Tibial artery (tissue), 4 donors: ENCODE measurements at regions of chr21 and their contacts with region 1.

Region 1: GRCh38 chr21:40143822-40144525 is 276.7 kb downstream of the PCP4 start:
- DNase-seq: no peak
- H3K4me3 ChIP-seq: no peak overlapping the region
- H3K27ac ChIP-seq: no peak overlapping the region
- H3K4me1 ChIP-seq: no peaks in the 10 kb centered on the region
- H3K27me3 ChIP-seq: peaks cover 0 to 10% of the 10 kb centered on the region in 2 donors
- CTCF ChIP-seq: peak; percentile 58 to 67

Region 2: DNA sequence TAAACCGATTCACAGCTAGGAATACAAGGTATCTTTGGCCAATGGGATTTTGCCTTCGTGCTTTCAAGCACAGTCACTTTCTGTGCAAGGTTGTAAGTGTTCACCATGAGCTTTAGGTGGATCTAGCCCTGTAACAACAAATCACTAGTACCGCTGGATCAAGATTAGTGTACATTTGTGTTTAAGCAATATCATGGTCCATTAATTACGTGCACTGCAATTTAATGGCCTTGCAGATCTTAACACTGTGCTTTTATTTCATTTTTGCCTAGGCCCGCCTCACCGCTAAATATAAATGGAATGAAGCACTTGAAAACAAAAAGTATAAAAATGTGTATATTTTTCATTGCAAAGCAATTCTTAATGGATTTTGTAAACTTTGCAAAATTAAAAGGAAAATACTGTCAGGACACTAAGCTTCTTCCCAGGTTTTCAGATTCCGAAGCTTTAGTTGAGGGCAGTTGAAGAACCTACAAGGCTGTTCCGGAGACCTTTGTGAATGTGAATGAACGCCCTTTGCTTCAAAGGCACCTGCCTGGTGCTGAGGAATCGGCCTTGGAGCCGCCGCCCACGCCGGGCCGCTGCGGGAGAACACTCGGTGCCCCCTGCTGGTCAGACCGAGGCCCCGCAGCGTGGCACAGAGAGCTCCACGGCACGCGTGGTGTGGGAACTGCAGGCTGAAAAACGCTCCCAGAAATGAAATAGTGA is 242.1 kb after region 1 on chr21:
- intact Hi-C with region 1: loop called (anchors 10 kb)
- DNase-seq: peak in 1 of 2 donors; percentile 31
- H3K4me3 ChIP-seq: no peak overlapping the region
- H3K27ac ChIP-seq: no peak overlapping the region
- H3K4me1 ChIP-seq: no peaks in the 10 kb centered on the region
- H3K27me3 ChIP-seq: no peaks in the 10 kb centered on the region
- CTCF ChIP-seq: peak; percentile 47 to 61

Region 3: GRCh38 chr21:40445283-40445803 is 301.4 kb after region 1 on chr21:
- intact Hi-C with region 1: no loop called
- DNase-seq: no peak
- H3K4me3 ChIP-seq: no peak overlapping the region
- H3K27ac ChIP-seq: no peak overlapping the region
- H3K4me1 ChIP-seq: no peaks in the 10 kb centered on the region
- H3K27me3 ChIP-seq: no peaks in the 10 kb centered on the region
- CTCF ChIP-seq: no peak

Region 4: GRCh38 chr21:41068967-41069642 is 925.1 kb after region 1 on chr21:
- intact Hi-C with region 1: loop called (anchors 5 kb)
- DNase-seq: peak; percentile 75 to 78
- H3K4me3 ChIP-seq: peak overlapping the region in 1 of 2 donors; percentile 29
- H3K27ac ChIP-seq: no peak overlapping the region
- H3K4me1 ChIP-seq: peaks cover 0 to 9% (median 5%) of the 10 kb centered on the region in 4 donors
- H3K27me3 ChIP-seq: peaks cover 0 to 53% of the 10 kb centered on the region in 2 donors
- CTCF ChIP-seq: peak; percentile 58 to 79